Ascending aorta (tissue), 2 donors: ENCODE measurements at regions of chr3 and their contacts with region 1.

Region 1: GRCh38 chr3:74465715-74466410 is 148.6 kb downstream of the CNTN3 start:
- DNase-seq: no peak
- H3K4me3 ChIP-seq: no peak overlapping the region
- H3K27ac ChIP-seq: peak overlapping the region; percentile 48 to 71
- H3K4me1 ChIP-seq: peaks cover 3 to 9% of the 10 kb centered on the region in 2 donors
- H3K27me3 ChIP-seq: no peaks in the 10 kb centered on the region
- CTCF ChIP-seq: no peak

Region 2: GRCh38 chr3:74426571-74426970 is 39.3 kb before region 1 on chr3:
- intact Hi-C with region 1: loop called (anchors 5 kb)
- DNase-seq: no peak
- H3K4me3 ChIP-seq: no peak overlapping the region
- H3K27ac ChIP-seq: peak overlapping the region; percentile 55 to 67
- H3K4me1 ChIP-seq: peaks cover 0 to 8% of the 10 kb centered on the region in 2 donors
- H3K27me3 ChIP-seq: no peaks in the 10 kb centered on the region
- CTCF ChIP-seq: no peak

Region 3: DNA sequence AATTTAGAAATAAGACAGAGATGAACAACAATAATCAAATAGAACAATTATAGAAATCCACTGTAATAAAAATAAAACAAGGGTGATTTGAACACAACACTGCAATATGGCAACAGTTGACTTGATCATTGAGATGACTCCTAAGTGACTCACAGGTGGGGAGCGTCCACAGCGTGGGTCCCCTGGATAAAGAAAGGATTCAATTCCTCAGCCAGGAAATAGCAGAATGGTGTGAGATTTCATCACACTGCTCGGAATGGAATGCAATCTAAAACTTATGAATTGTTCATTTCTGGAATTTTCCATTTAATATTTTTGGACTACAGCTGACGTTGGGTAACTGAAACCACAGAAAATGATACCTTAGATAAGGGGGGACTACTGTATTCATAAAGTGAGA is 66.6 kb after region 1 on chr3:
- intact Hi-C with region 1: loop called (anchors 5 kb)
- DNase-seq: peak in 1 of 2 donors; percentile 75
- H3K4me3 ChIP-seq: no peak overlapping the region
- H3K27ac ChIP-seq: peak overlapping the region; percentile 4 to 34
- H3K4me1 ChIP-seq: peaks cover 1 to 8% of the 10 kb centered on the region in 2 donors
- H3K27me3 ChIP-seq: no peaks in the 10 kb centered on the region
- CTCF ChIP-seq: no peak

Region 4: DNA sequence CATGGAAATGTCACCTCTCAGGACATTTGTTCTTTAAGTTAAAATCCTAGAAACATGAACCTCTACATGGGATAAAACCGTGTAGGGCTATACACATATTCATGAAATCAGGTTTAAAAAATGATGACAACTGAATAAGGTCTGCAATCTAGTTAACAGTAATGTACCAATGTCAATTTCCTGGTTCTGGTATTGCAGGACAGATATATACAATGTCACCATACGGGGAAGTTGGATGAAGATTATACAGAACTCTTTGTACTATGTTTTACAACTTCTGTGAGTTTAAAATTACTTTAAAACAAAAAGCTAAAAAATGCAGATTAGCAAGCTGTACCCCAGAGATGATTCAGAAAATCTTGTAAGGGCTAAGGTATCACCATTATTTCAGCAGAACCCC is 141.9 kb after region 1 on chr3:
- intact Hi-C with region 1: loop called (anchors 1 kb)
- DNase-seq: no peak
- H3K4me3 ChIP-seq: no peak overlapping the region
- H3K27ac ChIP-seq: no peak overlapping the region
- H3K4me1 ChIP-seq: no peaks in the 10 kb centered on the region
- H3K27me3 ChIP-seq: no peaks in the 10 kb centered on the region
- CTCF ChIP-seq: no peak